ENCODE measurements at regions of chr17 and their contacts with region 1.

Region 1: DNA sequence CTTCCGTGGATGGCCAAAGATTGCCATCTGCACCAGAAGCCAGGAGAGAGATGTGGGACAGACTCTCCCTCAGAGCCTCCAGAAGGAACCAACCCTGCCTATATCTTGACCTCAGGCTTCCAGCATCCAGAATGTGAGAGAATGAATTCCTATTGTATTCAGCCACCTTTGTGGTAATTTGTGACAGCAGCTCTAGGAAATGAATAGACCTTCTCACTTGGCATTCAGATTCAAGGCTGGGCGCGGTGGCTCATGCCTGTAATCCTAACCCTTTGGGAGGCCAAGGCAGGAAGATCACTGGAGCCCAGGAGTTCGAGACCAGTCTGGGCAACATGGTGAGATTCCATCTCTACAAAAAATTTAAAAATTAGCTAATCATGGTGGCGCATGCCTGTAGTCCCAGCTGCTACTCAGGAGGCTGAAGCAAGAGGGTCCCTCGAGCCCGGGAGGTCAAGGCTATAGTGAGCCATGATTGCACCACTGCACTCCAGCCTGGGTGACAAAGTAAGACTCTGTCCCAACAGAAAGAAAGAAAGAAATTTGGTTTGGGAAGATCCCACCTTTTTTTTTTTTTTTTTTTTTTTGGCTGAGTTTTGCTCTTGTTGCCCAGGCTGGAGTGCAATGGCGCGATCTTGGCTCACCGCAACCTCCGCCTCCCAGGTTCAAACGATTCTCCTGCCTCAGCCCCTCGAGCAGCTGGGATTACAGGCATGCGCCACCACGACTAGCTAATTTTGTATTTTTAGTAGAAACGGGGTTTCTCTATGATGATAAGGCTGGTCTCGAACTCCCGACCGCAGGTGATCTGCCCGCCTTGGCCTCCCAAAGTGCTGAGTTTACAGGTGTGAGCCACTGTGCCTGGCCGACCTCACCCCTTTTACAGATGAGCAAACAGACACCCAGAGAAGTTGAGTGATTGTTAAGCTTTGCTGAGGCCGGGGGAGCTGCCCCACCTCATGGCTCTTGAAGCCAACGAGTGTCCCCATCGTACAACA is 4.3 kb upstream of the CPSF4L start:
- DNase-seq: no peak
- ATAC-seq: no peak
- H3K4me3 ChIP-seq: no peak overlapping the region
- H3K27ac ChIP-seq: no peak overlapping the region
- H3K4me1 ChIP-seq: peaks cover 30% of the 10 kb centered on the region
- H3K27me3 ChIP-seq: no peaks in the 10 kb centered on the region
- CTCF ChIP-seq: no peak

Region 2: GRCh38 chr17:73401911-73402310 is 136.0 kb after region 1 on chr17:
- CTCF ChIA-PET with region 1: no interaction called
- POLR2A ChIA-PET with region 1: interaction called, 15 read pairs
- in situ Hi-C with region 1: no loop called
- intact Hi-C with region 1: no loop called
- DNase-seq: no peak
- ATAC-seq: no peak
- H3K4me3 ChIP-seq: no peak overlapping the region
- H3K27ac ChIP-seq: no peak overlapping the region
- H3K4me1 ChIP-seq: no peaks in the 10 kb centered on the region
- H3K27me3 ChIP-seq: no peaks in the 10 kb centered on the region
- CTCF ChIP-seq: no peak